Activated CD4-positive, alpha-beta T cell treated with anti-CD3 and anti-CD28 coated beads for 36 hours (primary cell): ENCODE measurements at regions of chr19 and their contacts with region 1.

Region 1: GRCh38 chr19:12777217-12778016 is 2.1 kb upstream of the HOOK2 start:
- DNase-seq: peak; percentile 90
- ATAC-seq: peak; percentile 24
- H3K4me3 Mint-ChIP-seq: peak overlapping the region; percentile 82
- H3K27ac Mint-ChIP-seq: peak overlapping the region; percentile 95
- H3K4me1 Mint-ChIP-seq: peaks cover 45% of the 10 kb centered on the region
- H3K27me3 Mint-ChIP-seq: no peaks in the 10 kb centered on the region

Region 2: GRCh38 chr19:12703046-12703445 is 74.4 kb before region 1 on chr19:
- CTCF ChIA-PET with region 1: no interaction called
- POLR2A ChIA-PET with region 1: no interaction called
- intact Hi-C with region 1: no loop called
- DNase-seq: peak; percentile 44
- ATAC-seq: peak; percentile 74
- H3K4me3 Mint-ChIP-seq: no peak overlapping the region
- H3K27ac Mint-ChIP-seq: no peak overlapping the region
- H3K4me1 Mint-ChIP-seq: peaks cover 2% of the 10 kb centered on the region
- H3K27me3 Mint-ChIP-seq: no peaks in the 10 kb centered on the region

Region 3: DNA sequence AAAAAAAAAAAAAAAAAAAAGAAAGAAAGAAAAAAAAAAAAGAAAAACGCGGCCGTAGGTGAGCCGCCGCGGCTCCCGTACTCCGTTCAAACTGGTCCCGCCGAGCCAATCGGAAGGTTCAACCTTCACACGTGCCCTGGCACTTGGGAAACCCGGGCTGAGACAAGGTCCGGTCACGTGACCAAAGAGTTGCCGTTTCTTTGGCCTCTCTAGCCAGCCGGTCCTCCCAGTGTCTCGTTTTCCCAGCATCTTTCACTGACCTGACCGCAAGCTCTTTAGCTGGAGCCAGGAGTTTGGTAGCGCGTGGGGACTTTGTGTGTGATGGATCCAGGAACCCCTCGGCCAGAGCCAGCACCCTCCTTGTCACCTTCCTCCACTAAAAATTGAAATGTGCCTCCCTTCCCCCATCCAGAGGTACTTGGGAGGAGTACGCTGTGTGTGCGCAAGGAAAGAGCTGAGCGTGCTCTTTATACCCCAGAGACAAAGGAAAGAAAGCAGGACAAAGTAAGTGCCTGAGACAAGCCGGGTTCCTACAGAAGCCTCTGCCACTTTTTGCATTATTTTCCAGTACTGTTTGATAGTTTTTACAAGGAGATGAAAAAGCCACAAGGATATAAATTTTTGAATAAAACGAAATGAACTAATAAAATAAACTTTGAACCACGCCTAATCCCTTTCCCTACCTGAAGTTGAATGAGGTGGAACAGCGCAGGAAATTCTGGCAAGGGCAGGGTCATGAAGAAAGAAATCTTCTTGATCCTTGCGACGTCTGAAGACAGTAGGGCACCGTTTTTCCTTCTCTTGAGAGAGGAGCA is 54.6 kb before region 1 on chr19:
- CTCF ChIA-PET with region 1: interaction called, 4 read pairs
- POLR2A ChIA-PET with region 1: no interaction called
- intact Hi-C with region 1: loop called in 1 of 2 experiments (anchors 1 kb)
- DNase-seq: peak; percentile 97
- ATAC-seq: peak; percentile 84
- H3K4me3 Mint-ChIP-seq: peak overlapping the region; percentile 99
- H3K27ac Mint-ChIP-seq: peak overlapping the region; percentile 90
- H3K4me1 Mint-ChIP-seq: peaks cover 35% of the 10 kb centered on the region
- H3K27me3 Mint-ChIP-seq: no peaks in the 10 kb centered on the region

Region 4: GRCh38 chr19:12796146-12797071 is 19.0 kb after region 1 on chr19:
- CTCF ChIA-PET with region 1: interaction called, 285 read pairs
- POLR2A ChIA-PET with region 1: interaction called, 53 read pairs
- intact Hi-C with region 1: loop called (anchors 1 kb)
- DNase-seq: peak; percentile 87
- ATAC-seq: peak; percentile 14
- H3K4me3 Mint-ChIP-seq: peak overlapping the region; percentile 63
- H3K27ac Mint-ChIP-seq: peak overlapping the region; percentile 84
- H3K4me1 Mint-ChIP-seq: peaks cover 35% of the 10 kb centered on the region
- H3K27me3 Mint-ChIP-seq: no peaks in the 10 kb centered on the region

Region 5: DNA sequence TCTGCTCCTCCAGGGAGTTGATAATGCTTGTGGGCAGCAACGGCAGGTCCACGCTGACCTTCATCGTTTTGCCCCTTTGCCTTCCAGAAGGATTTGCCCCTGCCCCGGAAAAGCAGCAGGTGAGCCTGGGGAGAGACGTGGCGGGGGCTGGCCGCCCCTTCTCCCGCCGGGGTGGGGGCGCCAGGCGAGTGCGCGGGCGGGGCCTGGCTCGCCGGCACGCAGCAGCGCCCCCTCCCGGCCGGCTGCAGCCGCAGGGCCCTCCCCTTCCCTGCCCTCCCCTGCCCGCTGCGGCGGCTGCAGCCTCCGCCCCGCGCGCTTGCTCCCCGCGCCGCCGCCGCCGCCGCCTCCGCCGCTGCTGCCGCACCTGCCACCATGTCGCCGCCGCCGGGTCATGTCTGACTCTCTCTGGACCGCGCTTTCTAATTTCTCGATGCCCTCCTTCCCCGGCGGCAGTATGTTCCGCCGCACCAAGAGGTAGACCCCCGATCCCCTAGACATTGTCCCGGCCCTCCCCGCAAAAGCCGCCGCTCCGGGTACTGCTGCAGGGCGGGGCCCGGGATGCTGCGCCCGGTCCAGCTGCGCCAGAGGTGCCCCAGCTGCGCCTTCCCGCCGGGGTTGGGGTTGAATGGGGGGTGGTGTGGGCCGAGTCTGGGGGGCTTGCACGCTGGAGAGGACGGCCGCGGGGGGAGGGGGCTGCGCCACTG is 60.9 kb after region 1 on chr19 and contains the start of gene MAST1:
- CTCF ChIA-PET with region 1: no interaction called
- POLR2A ChIA-PET with region 1: no interaction called
- intact Hi-C with region 1: loop called in 1 of 2 experiments (anchors 2 kb)
- DNase-seq: peak; percentile 82
- ATAC-seq: peak; percentile 61
- H3K4me3 Mint-ChIP-seq: peak within 1 kb of the TSS; percentile 57
- H3K27ac Mint-ChIP-seq: no peak within 1 kb of the TSS
- H3K4me1 Mint-ChIP-seq: peaks cover 35% of the 10 kb centered on the region
- H3K27me3 Mint-ChIP-seq: peaks cover 70% of the 10 kb centered on the region
- total RNA-seq, gene MAST1: 1.8 to 2.7 TPM

Region 6: DNA sequence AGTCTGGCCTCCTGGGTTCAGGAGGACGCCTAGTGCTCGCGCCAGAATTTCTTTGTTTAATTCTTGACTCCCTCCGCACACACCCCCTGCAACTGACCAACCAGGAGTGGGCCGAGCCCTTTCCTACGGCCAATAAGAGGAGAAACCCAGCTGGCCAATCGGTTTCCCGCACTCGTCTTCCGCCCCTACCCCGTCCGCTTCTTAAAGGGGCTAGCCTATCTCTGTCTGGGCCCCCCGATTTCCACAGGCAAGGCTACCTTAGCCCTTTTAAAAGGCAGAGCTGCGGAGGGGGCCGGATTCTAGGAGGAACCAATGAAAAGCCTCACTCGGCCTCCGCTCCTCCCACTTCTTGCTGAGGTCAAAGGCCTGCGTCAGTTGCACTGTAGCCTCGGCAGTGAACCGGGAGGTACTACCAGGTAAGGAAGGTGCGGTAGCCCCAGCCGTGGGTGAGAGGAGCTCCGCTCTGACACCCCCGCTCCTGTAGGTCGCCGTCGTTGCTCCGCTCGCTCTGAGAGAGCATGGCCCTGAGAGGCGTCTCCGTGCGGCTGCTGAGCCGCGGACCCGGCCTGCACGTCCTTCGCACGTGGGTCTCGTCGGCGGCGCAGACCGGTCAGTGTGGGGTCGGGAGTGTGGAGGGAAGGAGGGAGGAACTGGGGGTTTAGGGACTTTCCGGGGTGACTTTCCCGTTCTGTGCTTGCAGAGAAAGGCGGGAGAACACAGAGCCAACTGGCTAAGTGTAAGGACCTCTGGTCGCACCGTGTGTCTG is 113.6 kb after region 1 on chr19 and contains the start of gene GCDH:
- CTCF ChIA-PET with region 1: no interaction called
- POLR2A ChIA-PET with region 1: no interaction called
- intact Hi-C with region 1: loop called in 1 of 2 experiments (anchors 1 kb)
- DNase-seq: peak; percentile 98
- ATAC-seq: peak; percentile 98
- H3K4me3 Mint-ChIP-seq: peak within 1 kb of the TSS; percentile 100
- H3K27ac Mint-ChIP-seq: peak within 1 kb of the TSS; percentile 90
- H3K4me1 Mint-ChIP-seq: peaks cover 18% of the 10 kb centered on the region
- H3K27me3 Mint-ChIP-seq: no peaks in the 10 kb centered on the region
- total RNA-seq, gene GCDH: 36.2 to 41.1 TPM

Region 7: DNA sequence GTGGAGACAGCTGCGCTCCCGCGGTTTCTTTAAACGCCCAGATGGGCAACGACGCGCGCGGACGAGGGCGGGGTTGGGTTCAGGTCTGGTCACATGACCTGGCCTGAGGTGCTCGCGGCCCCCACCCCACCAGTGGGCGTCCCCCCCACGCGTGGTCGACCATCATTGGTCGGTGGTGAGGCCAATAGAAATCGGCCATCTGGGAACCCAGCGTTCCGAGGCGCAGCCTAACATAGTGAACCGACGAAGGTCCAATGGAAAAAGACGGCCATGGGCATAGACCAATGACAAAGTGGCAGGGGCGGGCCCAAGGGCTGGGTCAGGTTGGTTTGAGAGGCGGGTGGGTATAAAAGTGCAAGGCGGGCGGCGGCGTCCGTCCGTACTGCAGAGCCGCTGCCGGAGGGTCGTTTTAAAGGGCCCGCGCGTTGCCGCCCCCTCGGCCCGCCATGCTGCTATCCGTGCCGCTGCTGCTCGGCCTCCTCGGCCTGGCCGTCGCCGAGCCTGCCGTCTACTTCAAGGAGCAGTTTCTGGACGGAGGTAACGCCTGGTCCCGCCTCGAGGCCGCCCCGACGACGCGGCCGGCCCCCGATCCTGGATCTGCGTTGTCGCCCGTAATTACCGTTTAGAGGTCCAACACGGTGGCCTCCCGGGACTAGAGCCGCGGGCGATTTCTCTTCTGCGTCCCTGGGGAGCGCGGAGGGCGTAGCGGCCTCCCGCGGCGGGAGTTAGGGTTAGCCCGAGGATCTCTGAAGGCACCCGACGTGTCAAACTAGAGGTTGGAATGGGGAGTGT is 161.0 kb after region 1 on chr19 and contains the start of gene CALR:
- CTCF ChIA-PET with region 1: no interaction called
- POLR2A ChIA-PET with region 1: no interaction called
- intact Hi-C with region 1: loop called in 1 of 2 experiments (anchors 1 kb)
- DNase-seq: peak; percentile 99
- ATAC-seq: peak; percentile 89
- H3K4me3 Mint-ChIP-seq: peak within 1 kb of the TSS; percentile 99
- H3K27ac Mint-ChIP-seq: peak within 1 kb of the TSS; percentile 96
- H3K4me1 Mint-ChIP-seq: peaks cover 59% of the 10 kb centered on the region
- H3K27me3 Mint-ChIP-seq: no peaks in the 10 kb centered on the region
- total RNA-seq, gene CALR: 557 to 569 TPM